PC-9 (cell line): ENCODE measurements at regions of chr12 and their contacts with region 1.

Region 1: GRCh38 chr12:9064201-9064814 is 51.4 kb downstream of the A2M start:
- DNase-seq: peak; percentile 55 to 75
- H3K4me3 ChIP-seq: peak overlapping the region; percentile 82
- H3K27ac ChIP-seq: peak overlapping the region; percentile 56
- H3K4me1 ChIP-seq: peaks cover 6% of the 10 kb centered on the region
- H3K27me3 ChIP-seq: no peaks in the 10 kb centered on the region; the same call in 1 of the 2 replicates
- CTCF ChIP-seq: peak; percentile 49; the same call in 1 of the 2 replicates

Region 2: DNA sequence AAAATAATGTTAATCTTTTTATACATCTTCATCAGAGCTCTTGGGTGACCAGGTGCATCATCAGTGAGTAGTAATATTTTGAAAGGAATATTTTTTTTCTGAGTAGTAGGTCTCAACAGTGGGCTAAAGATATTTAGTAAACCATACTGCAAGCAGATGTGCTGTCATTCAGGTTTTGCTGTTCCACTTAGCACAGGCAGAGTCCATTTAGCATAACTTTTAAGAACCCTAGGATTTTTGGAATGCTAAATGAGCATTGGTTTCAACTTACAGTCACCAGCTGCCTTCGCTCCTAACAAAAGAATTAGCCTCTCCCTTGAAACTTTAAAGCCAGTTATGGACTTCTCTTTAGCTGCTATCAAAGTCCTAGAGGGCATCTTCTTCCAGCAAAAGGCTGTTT is 342.0 kb before region 1 on chr12:
- CTCF ChIA-PET with region 1: interaction called, 12 read pairs
- POLR2A ChIA-PET with region 1: no interaction called
- intact Hi-C with region 1: no loop called
- DNase-seq: no peak
- H3K4me3 ChIP-seq: no peak overlapping the region
- H3K27ac ChIP-seq: no peak overlapping the region
- H3K4me1 ChIP-seq: no peaks in the 10 kb centered on the region
- H3K27me3 ChIP-seq: no peaks in the 10 kb centered on the region
- CTCF ChIP-seq: no peak

Region 3: DNA sequence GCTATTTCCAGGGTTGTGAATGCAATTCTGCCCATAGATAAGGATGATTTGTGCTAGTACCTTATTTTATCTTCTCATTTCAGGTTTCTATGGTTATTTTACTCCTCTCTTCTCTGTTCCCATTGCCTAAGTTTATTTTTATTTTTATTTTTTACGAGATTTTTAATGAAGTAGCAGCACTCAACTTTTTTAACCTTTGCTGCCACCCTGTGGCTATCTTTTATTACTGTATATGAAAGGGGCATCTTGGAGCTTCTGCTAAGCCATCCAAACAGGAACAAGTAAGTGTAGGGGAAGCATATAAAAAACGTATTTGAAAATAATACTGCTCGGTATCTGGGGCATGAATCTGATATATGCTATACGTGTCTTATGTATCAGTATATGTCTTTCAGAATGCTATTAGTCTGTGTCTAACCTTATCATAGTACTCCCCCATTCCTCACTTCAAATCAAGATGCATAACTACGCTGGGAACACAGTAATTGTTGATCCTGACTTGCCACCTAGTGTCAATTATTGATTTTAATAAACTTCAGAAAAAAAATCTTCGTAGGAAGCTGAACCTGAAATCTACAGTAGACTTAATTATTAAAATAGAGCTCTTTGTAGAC is 14.7 kb before region 1 on chr12:
- CTCF ChIA-PET with region 1: interaction called, 7 read pairs
- POLR2A ChIA-PET with region 1: interaction called, 11 read pairs
- intact Hi-C with region 1: no loop called
- DNase-seq: peak; percentile 34 to 52
- H3K4me3 ChIP-seq: no peak overlapping the region
- H3K27ac ChIP-seq: no peak overlapping the region
- H3K4me1 ChIP-seq: no peaks in the 10 kb centered on the region
- H3K27me3 ChIP-seq: peaks cover 13% of the 10 kb centered on the region
- CTCF ChIP-seq: peak; percentile 80

Region 4: DNA sequence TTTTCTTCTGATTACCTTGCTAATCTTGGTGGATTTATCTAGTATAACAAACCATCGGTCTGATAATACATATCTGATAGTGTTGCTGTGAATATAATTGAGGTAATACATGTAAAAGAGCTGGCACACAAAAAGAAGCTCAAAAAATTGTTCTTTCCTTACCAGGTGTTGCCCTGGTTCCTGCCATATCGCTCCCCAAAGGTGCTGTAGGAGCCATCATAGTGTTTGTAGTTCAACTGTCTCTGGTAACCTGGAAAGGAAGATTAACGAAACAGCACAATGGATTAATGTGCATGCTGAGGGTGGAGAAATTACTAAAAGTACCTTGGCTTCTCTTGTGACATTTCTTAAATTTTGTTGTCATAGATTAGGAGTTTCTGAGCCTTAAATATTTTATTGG is 14.8 kb after region 1 on chr12:
- CTCF ChIA-PET with region 1: interaction called, 12 read pairs
- POLR2A ChIA-PET with region 1: no interaction called
- intact Hi-C with region 1: no loop called
- DNase-seq: no peak
- H3K4me3 ChIP-seq: no peak overlapping the region
- H3K27ac ChIP-seq: no peak overlapping the region
- H3K4me1 ChIP-seq: no peaks in the 10 kb centered on the region
- H3K27me3 ChIP-seq: no peaks in the 10 kb centered on the region
- CTCF ChIP-seq: no peak

Region 5: DNA sequence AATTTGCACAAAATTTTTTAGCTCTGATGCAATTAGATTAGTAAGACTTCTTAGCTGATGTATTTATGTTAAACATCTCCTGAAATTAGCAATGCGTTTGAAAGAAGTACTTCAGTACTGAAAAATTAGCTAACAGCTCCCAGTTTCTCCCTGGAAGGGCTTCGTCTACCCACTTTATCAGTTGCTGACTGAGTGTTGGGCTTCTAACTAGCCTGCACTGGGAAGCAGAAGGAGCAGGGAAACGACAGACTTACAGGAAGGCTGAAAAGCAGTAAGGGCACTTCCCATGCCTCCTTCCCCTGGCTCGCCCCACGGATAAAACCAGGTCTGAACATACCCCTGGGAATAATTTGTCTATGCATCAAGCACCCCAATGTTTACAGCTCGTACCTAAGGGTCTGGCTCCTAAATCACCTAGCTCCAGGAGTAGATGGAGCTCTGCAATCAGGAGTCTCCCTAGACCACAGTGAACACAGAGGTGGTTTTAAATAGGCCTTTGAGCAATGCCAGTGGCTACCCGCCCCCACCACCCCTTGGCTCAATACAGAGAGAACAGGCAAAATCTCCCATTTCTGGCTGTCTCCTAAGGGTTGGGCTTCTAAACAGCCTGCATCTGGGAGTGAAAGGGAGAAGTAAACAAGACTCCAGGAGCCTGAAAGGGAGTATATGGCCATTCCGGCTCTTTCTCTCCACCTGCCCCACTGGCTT is 27.7 kb after region 1 on chr12:
- CTCF ChIA-PET with region 1: no interaction called
- POLR2A ChIA-PET with region 1: no interaction called
- intact Hi-C with region 1: no loop called
- DNase-seq: no peak
- H3K4me3 ChIP-seq: no peak overlapping the region
- H3K27ac ChIP-seq: no peak overlapping the region
- H3K4me1 ChIP-seq: no peaks in the 10 kb centered on the region
- H3K27me3 ChIP-seq: no peaks in the 10 kb centered on the region
- CTCF ChIP-seq: no peak

Region 6: DNA sequence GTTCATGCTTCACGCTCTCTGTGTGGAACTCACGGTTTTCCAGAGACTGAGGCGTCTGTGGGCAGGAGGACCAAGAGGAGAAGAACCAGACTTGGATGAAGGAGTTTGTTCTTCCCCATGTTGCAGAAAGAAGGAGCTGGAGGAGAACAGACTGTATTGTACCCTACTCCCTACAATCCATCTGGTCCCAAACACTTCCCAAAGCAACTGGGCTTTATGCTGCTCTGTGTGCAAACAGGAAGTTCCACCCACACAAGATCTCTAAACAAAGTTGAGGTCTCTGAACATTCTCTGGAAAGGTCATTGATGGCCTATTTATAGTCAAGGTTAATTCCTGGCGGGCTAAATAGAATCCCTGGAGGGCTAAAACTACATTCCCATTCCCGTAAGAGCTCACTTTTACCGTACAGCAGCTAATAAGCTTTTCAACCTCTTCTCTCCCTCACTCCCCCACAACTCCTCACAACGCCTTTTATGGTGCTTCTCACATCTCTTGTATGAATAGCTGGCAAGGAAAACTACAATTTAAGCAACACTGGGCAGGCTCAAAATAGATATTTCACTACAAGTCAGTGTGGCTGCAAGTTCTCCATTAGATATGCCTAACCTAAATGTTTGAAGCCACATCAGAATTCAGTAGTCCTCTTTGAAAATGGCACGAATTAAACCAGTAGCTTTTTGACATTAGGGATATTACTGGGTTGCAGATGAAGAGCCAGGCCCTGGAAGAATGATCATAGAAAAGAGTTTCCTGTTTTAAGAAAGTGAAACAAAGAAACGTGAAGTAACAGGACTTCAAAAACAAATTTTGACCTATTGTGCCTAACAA is 51.6 kb after region 1 on chr12 and contains the start of gene A2M:
- CTCF ChIA-PET with region 1: no interaction called
- POLR2A ChIA-PET with region 1: no interaction called
- intact Hi-C with region 1: no loop called
- DNase-seq: no peak
- H3K4me3 ChIP-seq: no peak within 1 kb of the TSS
- H3K27ac ChIP-seq: no peak within 1 kb of the TSS
- H3K4me1 ChIP-seq: no peaks in the 10 kb centered on the region
- H3K27me3 ChIP-seq: peaks cover 6% of the 10 kb centered on the region; the same call in 1 of the 2 replicates
- CTCF ChIP-seq: no peak
- total RNA-seq, gene A2M: not detected in 2 replicates